ENCODE measurements at regions of chr20 and their contacts with region 1.

Region 1: DNA sequence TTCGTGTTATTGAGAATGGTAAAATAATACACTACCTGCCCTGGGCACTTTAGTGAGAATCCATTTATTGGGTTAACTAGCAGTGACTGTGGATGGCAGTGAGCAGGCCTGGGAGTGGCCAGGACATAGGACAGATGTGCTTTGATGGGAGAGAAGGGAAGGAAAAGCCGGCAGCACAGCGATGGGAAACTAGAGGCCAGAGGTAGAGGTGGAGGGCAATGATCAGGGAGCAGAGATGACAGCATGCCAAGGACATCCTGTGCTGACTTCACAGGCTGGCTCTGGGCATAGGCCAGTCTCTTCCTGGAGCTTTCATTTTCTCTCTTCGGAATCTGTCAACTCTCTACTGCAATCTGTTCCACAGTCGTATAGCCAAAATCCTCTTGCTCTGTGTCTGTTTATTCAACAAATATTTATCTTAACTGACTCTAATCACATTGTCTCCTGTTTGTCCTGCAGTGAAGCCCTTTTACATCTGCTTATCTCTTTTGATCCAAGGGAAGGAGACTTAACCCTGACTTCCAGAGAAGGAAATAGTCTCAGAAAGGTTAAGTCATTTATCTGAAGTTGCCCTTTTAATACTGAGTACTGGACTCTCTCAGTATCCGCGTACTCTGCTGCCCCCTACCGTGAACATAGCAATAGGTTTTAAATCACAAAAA is 18.4 kb upstream of the MMP24 start:
- DNase-seq: peak; percentile 93 to 96
- H3K4me3 ChIP-seq: no peak overlapping the region; the same call in 1 of the 2 replicates
- H3K4me3 Mint-ChIP-seq: no peak overlapping the region
- H3K27ac Mint-ChIP-seq: no peak overlapping the region
- H3K4me1 ChIP-seq: peaks cover 21% of the 10 kb centered on the region; the same call in 1 of the 2 replicates
- H3K4me1 Mint-ChIP-seq: peaks cover 5% of the 10 kb centered on the region
- H3K27me3 ChIP-seq: no peaks in the 10 kb centered on the region
- H3K27me3 Mint-ChIP-seq: no peaks in the 10 kb centered on the region
- CTCF ChIP-seq: peak; percentile 92 to 98

Region 2: DNA sequence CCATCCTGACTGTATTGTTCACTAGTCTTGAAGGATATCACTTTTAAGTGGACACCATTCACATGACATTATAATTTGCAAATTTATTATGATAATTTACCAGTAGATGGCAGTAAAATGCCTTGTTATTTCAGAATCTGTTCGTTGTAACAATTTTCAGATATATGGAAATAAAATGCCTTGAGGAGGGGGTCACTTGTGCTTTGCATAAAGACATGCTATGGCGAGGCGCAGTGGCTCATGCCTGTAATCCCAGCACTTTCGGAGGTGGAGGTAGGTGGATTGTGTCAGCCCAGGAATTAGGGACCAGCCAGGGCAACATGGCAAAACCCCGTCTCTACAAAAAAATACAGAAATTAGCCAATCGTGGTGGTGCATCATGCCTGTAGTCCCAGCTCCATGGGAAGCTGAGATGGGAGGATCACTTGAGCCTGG is 373.6 kb before region 1 on chr20:
- CTCF ChIA-PET with region 1: no interaction called
- POLR2A ChIA-PET with region 1: no interaction called
- intact Hi-C with region 1: loop called (anchors 1 kb)
- DNase-seq: peak in 1 of 2 experiments; percentile 40
- H3K4me3 ChIP-seq: no peak overlapping the region
- H3K4me3 Mint-ChIP-seq: no peak overlapping the region
- H3K27ac Mint-ChIP-seq: no peak overlapping the region
- H3K4me1 ChIP-seq: peaks cover 7% of the 10 kb centered on the region; the same call in 1 of the 2 replicates
- H3K4me1 Mint-ChIP-seq: no peaks in the 10 kb centered on the region
- H3K27me3 ChIP-seq: no peaks in the 10 kb centered on the region
- H3K27me3 Mint-ChIP-seq: peaks cover 9% of the 10 kb centered on the region
- CTCF ChIP-seq: peak; percentile 43 to 75

Region 3: DNA sequence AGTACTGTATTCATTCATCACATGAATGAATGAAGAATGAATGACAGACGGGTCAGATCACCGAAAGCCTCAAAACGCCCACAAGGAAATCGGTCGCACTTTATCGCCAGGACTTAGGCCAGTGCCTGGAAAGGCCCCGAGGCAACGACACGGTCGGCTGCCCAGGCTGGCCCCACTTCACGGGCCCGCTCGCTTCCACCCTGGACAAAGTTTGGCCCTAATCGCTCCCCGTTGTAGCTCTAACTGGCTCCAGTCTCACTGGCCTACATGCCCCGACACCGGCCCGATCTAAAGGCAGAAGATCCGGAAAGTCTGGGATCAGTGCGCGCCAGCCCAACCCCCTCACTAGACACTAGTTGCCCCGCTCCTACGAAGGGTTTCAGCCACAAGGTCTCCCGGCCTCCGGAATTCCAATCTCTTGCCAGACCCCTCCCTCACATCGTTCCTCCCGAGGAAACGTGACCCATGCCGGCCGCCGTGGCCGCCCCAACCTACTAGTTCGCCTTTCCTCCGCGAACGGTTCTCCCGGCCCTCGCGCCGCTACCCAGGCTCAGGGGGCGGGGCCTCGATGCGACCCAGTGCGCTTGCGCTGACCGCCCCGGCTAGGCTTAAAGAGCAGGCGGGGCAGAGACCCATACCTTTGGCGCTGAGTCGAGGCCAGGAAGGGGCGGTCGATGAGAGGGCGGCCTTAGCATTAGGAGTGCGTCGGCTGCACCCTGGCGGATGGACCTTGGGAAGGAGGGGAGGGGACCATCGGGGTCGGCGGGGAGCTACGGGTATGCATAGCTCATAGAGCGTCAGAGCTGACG is 252.6 kb before region 1 on chr20 and contains the starts of genes GSS and MYH7B:
- CTCF ChIA-PET with region 1: interaction called, 5 read pairs
- POLR2A ChIA-PET with region 1: no interaction called
- intact Hi-C with region 1: loop called (anchors 10 kb)
- DNase-seq: peak; percentile 100
- H3K4me3 ChIP-seq: peak within 1 kb of the TSS; percentile 57
- H3K4me3 Mint-ChIP-seq: peak within 1 kb of the TSS; percentile 90
- H3K27ac Mint-ChIP-seq: peak within 1 kb of the TSS; percentile 96
- H3K4me1 ChIP-seq: peaks cover 5% of the 10 kb centered on the region
- H3K4me1 Mint-ChIP-seq: peaks cover 25% of the 10 kb centered on the region
- H3K27me3 ChIP-seq: no peaks in the 10 kb centered on the region
- H3K27me3 Mint-ChIP-seq: no peaks in the 10 kb centered on the region
- CTCF ChIP-seq: peak; percentile 64 to 83
- total RNA-seq, gene GSS: 138 TPM in 2 replicates
- total RNA-seq, gene MYH7B: 1.9 and 2.5 TPM in 2 replicates

Region 4: DNA sequence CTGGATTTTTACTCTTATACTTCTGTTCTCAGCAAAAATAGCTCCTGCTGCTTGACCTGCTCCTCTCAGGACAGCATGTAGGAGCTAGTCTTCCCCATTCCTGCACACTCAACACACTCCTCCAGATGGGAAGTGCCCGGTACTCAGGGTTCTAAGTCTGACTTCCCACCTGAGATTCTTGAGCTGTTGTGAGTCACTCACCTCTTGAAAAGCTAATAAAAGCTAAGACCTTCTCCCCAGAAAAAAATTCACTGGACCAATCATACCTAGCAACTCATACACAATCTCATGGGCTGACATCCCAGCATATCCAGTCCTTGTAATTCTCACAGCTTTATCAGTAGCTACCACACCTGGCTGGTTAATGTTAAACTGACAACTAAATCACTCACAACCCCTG is 168.9 kb before region 1 on chr20:
- CTCF ChIA-PET with region 1: interaction called, 7 read pairs
- POLR2A ChIA-PET with region 1: no interaction called
- intact Hi-C with region 1: loop called (anchors 10 kb)
- DNase-seq: peak; percentile 89 to 95
- H3K4me3 ChIP-seq: no peak overlapping the region
- H3K4me3 Mint-ChIP-seq: peak overlapping the region; percentile 33
- H3K27ac Mint-ChIP-seq: peak overlapping the region; percentile 38
- H3K4me1 ChIP-seq: peaks cover 43% of the 10 kb centered on the region
- H3K4me1 Mint-ChIP-seq: peaks cover 46% of the 10 kb centered on the region
- H3K27me3 ChIP-seq: no peaks in the 10 kb centered on the region
- H3K27me3 Mint-ChIP-seq: no peaks in the 10 kb centered on the region
- CTCF ChIP-seq: no peak

Region 5: GRCh38 chr20:35102441-35102840 is 105.6 kb before region 1 on chr20:
- CTCF ChIA-PET with region 1: no interaction called
- POLR2A ChIA-PET with region 1: no interaction called
- intact Hi-C with region 1: no loop called
- DNase-seq: no peak
- H3K4me3 ChIP-seq: no peak overlapping the region
- H3K4me3 Mint-ChIP-seq: no peak overlapping the region
- H3K27ac Mint-ChIP-seq: no peak overlapping the region
- H3K4me1 ChIP-seq: no peaks in the 10 kb centered on the region
- H3K4me1 Mint-ChIP-seq: no peaks in the 10 kb centered on the region
- H3K27me3 ChIP-seq: no peaks in the 10 kb centered on the region
- H3K27me3 Mint-ChIP-seq: peaks cover 8% of the 10 kb centered on the region
- CTCF ChIP-seq: no peak

Region 6: DNA sequence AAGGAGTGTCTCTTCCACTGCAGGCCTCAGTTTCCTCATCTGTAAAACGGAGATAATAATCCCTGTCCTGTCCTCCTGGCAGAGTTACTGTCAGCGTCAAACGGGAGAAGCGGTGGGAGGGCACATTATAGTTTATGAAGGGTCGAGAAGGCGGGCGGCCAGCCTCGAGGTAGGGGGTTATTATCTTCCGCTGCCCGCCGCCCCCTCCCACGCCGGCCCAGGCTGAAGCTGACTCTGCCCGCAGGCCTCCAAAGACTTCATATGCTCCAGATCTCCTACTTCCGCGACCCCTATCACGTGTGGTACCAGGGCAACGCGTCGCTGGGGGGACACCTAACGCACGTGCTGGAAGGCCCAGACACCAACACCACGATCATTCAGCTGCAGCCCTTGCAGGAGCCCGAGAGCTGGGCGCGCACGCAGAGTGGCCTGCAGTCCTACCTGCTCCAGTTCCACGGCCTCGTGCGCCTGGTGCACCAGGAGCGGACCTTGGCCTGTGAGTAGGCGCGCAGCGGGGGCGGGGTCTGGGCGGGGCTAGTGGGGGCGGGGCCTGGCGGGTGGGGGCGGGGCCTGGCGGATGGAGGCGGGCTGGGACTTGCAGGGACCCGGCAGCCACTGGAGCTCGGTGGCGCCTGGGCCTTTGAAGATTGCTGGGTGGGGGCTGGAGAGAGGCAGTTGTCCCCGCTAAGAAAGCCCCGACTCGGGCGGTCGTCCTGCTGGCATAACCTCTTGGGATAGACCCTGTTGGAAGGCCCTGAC is 33.4 kb before region 1 on chr20:
- CTCF ChIA-PET with region 1: interaction called, 6 read pairs
- POLR2A ChIA-PET with region 1: interaction called, 3 read pairs
- intact Hi-C with region 1: loop called (anchors 1 kb)
- DNase-seq: peak; percentile 93 to 97
- H3K4me3 ChIP-seq: peak overlapping the region; percentile 60
- H3K4me3 Mint-ChIP-seq: peak overlapping the region; percentile 91
- H3K27ac Mint-ChIP-seq: peak overlapping the region; percentile 81
- H3K4me1 ChIP-seq: peaks cover 48% of the 10 kb centered on the region
- H3K4me1 Mint-ChIP-seq: peaks cover 53% of the 10 kb centered on the region
- H3K27me3 ChIP-seq: no peaks in the 10 kb centered on the region
- H3K27me3 Mint-ChIP-seq: no peaks in the 10 kb centered on the region
- CTCF ChIP-seq: no peak

Region 7: GRCh38 chr20:35192111-35192872 is 15.8 kb before region 1 on chr20:
- CTCF ChIA-PET with region 1: interaction called, 4 read pairs
- POLR2A ChIA-PET with region 1: no interaction called
- intact Hi-C with region 1: loop called (anchors 1 kb)
- DNase-seq: peak; percentile 48 to 59
- H3K4me3 ChIP-seq: no peak overlapping the region
- H3K4me3 Mint-ChIP-seq: no peak overlapping the region
- H3K27ac Mint-ChIP-seq: peak overlapping the region; percentile 29
- H3K4me1 ChIP-seq: peaks cover 55% of the 10 kb centered on the region
- H3K4me1 Mint-ChIP-seq: peaks cover 46% of the 10 kb centered on the region
- H3K27me3 ChIP-seq: no peaks in the 10 kb centered on the region
- H3K27me3 Mint-ChIP-seq: no peaks in the 10 kb centered on the region
- CTCF ChIP-seq: no peak

Region 8: DNA sequence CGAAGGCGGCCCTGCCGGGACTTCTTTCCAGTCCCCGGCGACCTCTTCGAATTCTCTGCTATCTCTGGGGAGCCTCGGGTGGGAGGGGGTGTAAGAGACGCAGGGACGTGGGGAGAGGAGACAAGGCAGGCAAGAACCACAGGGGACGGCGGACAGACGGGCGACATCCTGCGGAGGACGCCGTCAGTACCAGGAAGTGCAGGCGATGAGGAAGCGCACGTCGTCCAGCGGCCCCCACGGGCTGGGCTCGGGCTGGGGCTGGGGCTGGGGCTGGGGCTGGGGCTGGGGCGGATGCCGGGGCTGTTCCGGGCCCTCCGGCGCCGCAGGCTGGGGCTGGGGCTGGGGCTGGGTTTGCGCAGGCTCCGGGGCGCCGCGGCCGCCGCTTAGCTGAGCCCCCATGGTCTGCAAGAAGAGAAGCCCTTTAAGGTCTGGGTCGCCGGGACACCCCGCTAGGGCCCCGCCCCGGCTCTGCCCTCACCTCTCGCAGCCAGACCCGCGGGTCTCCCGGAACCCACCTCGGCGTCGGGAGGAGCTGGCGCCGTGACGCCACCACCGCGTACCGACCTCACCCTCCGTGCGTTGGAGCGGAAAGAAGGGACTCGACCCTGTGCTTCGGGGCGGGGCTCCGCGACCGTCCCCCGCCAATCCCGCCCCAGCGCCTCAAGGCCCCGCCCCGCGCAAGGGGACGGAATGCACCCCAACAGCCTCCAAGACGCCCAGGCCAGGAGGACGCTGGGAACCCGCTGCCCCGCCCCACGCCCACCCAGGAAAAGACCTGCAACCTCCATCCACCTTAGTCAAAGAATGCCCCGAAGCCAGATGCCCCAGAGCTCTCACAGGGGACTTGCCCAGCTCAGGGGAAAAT is 69.7 kb after region 1 on chr20 and contains the start of gene MMP24OS:
- CTCF ChIA-PET with region 1: no interaction called
- POLR2A ChIA-PET with region 1: no interaction called
- intact Hi-C with region 1: no loop called
- DNase-seq: peak; percentile 91
- H3K4me3 ChIP-seq: peak within 1 kb of the TSS; percentile 58
- H3K4me3 Mint-ChIP-seq: peak within 1 kb of the TSS; percentile 72
- H3K27ac Mint-ChIP-seq: peak within 1 kb of the TSS; percentile 74
- H3K4me1 ChIP-seq: peaks cover 4% of the 10 kb centered on the region; the same call in 1 of the 2 replicates
- H3K4me1 Mint-ChIP-seq: no peaks in the 10 kb centered on the region
- H3K27me3 ChIP-seq: no peaks in the 10 kb centered on the region
- H3K27me3 Mint-ChIP-seq: no peaks in the 10 kb centered on the region
- CTCF ChIP-seq: peak; percentile 11 to 48
- total RNA-seq, gene MMP24OS: 38.8 and 42.3 TPM in 2 replicates

Region 9: GRCh38 chr20:35329435-35330139 is 121.5 kb after region 1 on chr20:
- CTCF ChIA-PET with region 1: no interaction called
- POLR2A ChIA-PET with region 1: no interaction called
- intact Hi-C with region 1: no loop called
- DNase-seq: peak; percentile 91 to 93
- H3K4me3 ChIP-seq: no peak overlapping the region
- H3K4me3 Mint-ChIP-seq: no peak overlapping the region
- H3K27ac Mint-ChIP-seq: peak overlapping the region; percentile 69
- H3K4me1 ChIP-seq: peaks cover 55% of the 10 kb centered on the region
- H3K4me1 Mint-ChIP-seq: peaks cover 32% of the 10 kb centered on the region
- H3K27me3 ChIP-seq: no peaks in the 10 kb centered on the region
- H3K27me3 Mint-ChIP-seq: no peaks in the 10 kb centered on the region
- CTCF ChIP-seq: peak; percentile 92 to 99